Esophagus squamous epithelium (tissue), 5 donors: ENCODE measurements at regions of chr1 and their contacts with region 1.

Region 1: DNA sequence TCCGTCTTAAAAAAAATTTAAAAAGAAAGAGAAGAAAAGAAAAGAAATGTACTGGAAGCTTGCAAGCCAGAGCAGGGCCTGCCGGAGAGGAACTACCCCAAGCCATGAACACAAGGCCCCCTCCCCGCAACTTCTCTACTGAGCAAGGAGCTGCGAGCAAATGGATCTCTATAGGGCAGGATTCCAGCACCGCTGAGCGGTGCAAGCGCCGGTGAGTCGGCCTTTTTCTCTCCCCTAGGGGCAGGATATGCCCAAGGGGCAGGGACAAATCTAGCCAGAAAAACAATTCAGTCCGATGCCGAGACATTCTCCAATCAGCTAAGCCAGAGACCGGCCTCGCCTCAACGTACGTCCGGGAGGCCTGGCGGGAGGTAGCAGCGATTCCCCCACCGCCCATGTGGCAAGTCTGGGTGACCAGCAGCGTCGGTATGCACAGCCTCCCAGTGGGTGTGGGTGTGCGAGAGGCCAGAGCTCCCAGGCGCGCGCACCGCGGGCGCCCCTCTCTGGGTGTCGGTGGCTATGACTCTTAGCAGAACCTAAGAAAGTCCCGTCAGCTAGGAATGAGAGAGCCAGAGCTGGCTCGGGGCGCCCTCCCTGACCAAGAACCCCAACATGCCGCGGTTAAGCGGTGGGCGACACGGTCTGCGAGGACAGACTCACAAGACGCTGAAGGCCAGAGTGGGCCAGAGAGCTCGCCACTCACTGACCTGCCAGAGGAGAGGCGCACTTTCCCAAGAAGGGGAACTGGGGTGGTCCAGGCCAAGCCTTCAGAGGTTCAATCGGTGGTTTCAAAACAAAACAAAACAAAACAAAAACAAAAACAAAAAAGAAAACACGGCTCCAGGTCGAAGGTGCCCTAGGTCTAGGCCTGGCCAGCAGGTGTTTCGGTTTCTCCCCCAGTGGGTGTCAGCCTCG is 1.9 kb downstream of the CSMD2 start:
- DNase-seq: peak; percentile 12
- H3K4me3 ChIP-seq: peak overlapping the region; percentile 6 to 63 (median 41)
- H3K27ac ChIP-seq: no peak overlapping the region
- H3K4me1 ChIP-seq: peaks cover 30 to 46% (median 33%) of the 10 kb centered on the region in 3 donors
- H3K27me3 ChIP-seq: peaks cover 11 to 99% (median 18%) of the 10 kb centered on the region in 4 donors
- CTCF ChIP-seq: peak in 5 of 6 experiments; percentile 31 to 66 (median 49)
- POLR2A ChIP-seq: no peak

Region 2: DNA sequence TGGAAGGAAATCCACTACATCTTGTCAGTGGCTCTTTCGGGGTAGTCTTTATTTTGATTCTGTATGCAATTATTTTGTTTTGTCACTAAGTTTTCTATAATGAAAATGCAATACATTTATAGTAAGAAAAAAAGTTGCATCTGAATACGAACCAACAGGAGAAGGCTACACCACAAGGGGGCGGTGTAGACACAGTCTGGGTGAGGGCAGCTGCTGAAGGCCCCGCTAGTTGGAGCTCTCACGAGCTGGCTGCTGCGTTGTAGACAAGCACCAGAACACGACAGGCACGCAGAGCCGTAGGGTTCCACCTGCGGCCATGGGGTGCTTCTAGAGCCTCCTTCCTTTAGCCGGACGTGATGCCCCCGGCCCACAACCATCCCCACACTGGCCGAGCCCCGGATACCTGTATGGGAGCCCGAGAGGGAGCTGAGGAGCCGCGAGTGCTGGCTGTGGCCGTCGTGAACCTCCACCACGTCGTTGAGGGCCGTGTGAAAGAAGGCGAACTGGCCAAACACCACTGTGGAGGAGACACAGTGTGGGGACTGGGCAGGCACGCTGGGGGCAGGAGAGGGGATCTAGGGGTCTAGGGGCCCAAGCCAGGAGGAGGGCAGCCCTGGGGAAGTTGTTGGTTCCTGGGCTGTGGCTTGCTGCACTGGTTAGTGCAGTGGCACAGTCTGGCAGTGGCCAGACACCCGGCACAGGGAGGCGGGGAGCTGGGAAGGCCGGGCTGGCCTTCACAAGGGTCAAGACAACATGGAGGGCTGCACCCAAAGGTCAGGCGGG is 529.9 kb before region 1 on chr1:
- intact Hi-C with region 1: loop called (anchors 10 kb)
- DNase-seq: peak; percentile 34
- H3K4me3 ChIP-seq: peak overlapping the region in 1 of 4 donors; percentile 5
- H3K27ac ChIP-seq: no peak overlapping the region
- H3K4me1 ChIP-seq: peaks cover 0 to 14% (median 2%) of the 10 kb centered on the region in 3 donors
- H3K27me3 ChIP-seq: peaks cover 0 to 51% (median 0%) of the 10 kb centered on the region in 4 donors
- CTCF ChIP-seq: peak; percentile 80 to 95 (median 88)
- POLR2A ChIP-seq: no peak

Region 3: DNA sequence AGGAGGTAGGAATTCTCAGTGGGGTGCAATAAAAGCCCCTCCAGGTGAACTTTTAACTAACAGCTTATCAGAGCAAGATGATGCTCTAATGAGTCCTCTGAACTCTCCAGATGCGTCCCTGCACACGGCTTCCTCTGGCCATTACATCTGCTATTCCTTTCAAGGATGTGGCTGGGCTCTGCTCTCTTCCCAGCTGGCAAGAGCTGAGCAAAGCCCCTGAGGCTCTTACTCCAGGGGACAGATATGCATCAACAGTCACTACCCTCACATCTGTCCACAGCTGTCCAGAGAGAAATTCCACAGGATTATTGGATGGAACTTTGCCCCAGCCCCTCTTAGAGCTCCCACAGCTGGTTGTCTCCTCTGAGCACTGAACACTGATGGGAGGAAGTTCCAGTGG is 281.4 kb after region 1 on chr1:
- intact Hi-C with region 1: no loop called
- DNase-seq: no peak
- H3K4me3 ChIP-seq: no peak overlapping the region
- H3K27ac ChIP-seq: no peak overlapping the region
- H3K4me1 ChIP-seq: no peaks in the 10 kb centered on the region
- H3K27me3 ChIP-seq: peaks cover 0 to 65% (median 0%) of the 10 kb centered on the region in 4 donors
- CTCF ChIP-seq: no peak
- POLR2A ChIP-seq: no peak